ENCODE measurements at regions of chr3 and their contacts with region 1.

Region 1: GRCh38 chr3:160225176-160226025 is at the start of gene C3orf80:
- DNase-seq: peak in 9 of 10 donors; percentile 34 to 79 (median 60)
- H3K4me3 ChIP-seq: peak within 1 kb of the TSS; percentile 47 to 80 (median 69)
- H3K27ac ChIP-seq: peak within 1 kb of the TSS in 57 of 59 donors; percentile 8 to 86 (median 73)
- H3K27me3 ChIP-seq: peaks cover 0 to 28% (median 0%) of the 10 kb centered on the region in 45 donors
- CTCF ChIP-seq: peak in 34 of 56 donors; percentile 5 to 60 (median 30)
- total RNA-seq, gene C3orf80: 6.4 to 36.0 (median 19.3) TPM

Region 2: DNA sequence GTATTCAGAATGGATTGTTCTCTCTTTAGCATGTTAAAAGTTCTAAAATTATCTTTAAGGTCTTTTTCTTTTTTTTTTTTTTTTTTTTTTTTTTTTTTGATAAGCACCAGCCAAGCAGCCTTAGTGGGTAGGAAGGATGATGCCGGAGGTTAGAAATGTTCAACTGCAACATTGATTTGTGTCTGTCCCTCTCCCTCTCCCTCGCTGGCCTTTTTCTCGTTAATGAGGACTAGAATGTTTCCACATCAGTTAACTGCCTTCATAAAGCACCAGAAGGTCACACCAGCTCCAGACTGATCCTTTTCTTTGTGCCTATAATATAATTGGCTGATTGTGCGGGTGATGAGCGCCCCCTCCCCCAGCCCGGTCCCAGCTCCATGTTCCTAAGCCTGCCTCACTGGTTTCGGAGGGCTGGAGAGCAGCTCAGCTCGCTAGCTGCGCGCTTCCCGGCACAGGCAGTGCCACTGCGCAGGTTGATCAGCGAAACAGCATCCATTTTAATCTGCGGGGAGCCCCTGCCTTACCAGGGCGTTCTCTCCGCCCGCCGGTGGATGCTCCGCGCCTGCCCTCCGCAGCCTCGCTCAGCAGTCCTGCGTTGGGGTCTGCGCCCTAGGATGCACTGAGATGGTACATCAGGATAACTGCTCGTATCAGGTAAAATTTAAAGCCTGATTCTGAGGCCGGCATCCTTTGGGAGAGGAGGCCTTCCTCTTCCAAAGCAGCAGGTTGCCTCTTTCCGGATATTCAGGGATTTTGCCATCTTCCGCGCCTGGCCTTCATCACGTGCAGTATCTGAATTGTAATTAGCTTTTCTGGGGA is 385.6 kb before region 1 on chr3:
- intact Hi-C with region 1: loop called in 1 of 2 experiments (anchors 10 kb)
- DNase-seq: peak; percentile 79 to 93 (median 89)
- H3K4me3 ChIP-seq: peak within 1 kb of the TSS; percentile 57 to 93 (median 75)
- H3K27ac ChIP-seq: peak within 1 kb of the TSS; percentile 67 to 100 (median 98)
- H3K27me3 ChIP-seq: no peaks in the 10 kb centered on the region
- CTCF ChIP-seq: peak in 30 of 56 donors; percentile 5 to 53 (median 16)

Region 3: DNA sequence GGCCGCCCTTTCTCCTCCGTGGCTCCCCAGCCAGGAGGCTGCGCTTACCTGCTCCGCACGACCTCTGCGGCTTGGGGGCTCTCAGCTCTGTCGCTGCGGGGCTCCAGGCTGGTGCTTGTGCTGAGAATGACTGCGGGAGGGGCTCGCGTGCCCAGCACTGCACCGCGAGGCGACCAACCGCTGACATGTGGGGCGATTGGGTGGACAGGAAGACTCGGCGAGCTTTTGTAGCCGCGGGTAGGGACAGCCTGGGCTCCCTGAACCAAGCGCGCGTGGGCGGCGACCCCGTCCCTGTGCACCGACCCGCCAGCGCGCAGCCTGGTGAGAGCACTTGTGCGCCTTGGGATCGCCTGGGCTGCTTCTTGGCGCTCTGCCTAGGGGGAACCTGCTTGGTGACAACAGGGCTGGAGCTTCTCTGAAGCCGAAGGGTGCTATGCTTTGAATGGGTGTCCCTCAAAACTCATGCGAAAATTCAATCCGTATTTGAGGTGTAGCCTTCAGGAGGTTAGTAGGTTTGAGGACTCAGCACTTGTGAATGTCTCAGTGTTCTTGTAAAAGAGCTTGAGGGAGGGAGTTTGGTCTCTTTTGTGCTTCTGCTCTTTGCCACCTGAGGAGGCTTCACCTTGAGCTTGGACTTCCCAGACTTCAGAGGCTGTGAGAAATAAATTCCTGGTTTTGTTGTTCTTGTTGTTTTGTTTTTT is 186.4 kb before region 1 on chr3:
- intact Hi-C with region 1: loop called in 1 of 2 experiments (anchors 5 kb)
- DNase-seq: peak in 7 of 10 donors; percentile 28 to 57 (median 54)
- H3K4me3 ChIP-seq: peak overlapping the region; percentile 31 to 72 (median 54)
- H3K27ac ChIP-seq: peak overlapping the region in 25 of 59 donors; percentile 6 to 78 (median 58)
- H3K27me3 ChIP-seq: peaks cover 0 to 19% (median 0%) of the 10 kb centered on the region in 45 donors
- CTCF ChIP-seq: no peak

Measured in dorsolateral prefrontal cortex (tissue), 120 donors.